BJ (cell line): ENCODE measurements at regions of chr7 and their contacts with region 1.

Region 1: DNA sequence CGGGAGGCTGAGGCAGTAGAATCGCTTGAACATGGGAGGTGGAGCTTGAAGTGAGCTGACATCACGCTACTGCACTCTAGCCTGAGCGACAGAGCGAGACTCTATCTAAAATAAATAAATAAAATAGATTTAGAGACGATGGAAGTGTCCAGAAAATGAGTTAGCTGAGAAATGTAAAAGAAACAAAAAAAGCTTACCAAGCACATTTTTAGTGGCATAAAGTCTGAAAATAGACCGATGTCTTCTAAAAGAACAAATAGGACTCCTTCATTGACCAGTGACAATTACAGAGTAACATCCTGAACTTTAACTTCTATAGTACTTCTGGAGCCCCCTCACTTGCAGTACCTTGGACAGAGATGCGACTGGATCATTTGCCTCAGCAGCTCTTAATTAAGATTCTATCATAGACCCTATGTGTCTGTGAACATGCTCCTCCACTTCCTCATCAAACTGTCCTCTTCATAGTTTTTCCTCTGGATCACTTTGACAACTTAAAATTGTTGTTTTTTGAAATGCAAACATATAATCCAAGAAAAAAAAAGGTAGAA is 25.2 kb upstream of the SRPK2 start:
- DNase-seq: no peak
- H3K4me3 ChIP-seq: no peak overlapping the region
- H3K27me3 ChIP-seq: peaks cover 2% of the 10 kb centered on the region; the same call in 1 of the 2 replicates
- CTCF ChIP-seq: no peak

Region 2: DNA sequence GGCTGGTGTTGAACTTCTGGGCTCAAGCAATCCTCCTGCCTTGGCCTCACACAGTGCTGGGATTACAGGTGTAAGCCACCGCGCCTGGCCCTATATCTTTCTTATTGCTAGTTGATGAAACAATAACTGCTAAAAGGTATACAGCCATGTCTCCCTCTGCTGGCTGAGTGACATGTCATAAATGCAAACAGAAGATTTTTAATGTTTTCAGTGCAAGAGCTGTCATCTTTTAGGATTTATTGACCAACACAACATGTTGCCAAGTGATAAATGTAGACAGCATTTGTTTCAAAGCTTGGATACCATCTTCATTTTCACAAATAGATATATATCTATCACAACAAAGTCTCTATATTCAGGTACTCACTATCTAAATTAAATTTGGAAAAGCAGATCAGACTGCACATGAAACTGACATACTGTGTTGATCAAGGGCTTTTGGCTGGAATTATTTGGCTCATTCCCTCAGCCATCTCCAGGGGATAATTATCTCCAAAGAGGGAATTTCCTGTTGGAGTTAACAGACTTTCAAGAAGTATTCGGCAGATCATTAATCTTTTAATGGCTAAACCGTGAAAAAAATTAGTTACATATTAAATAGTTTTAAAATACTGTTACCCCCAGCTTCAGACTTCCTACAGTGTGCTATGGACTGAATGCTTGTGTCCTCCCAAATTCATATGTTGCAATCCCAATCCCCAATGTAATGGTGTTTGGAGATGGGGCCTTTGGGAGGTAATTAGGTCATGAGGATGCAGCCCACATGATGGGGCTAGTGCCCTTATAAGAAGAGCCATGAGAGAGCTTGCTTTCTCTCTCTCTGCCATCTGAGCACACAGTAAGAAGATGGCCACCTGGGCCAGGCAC is 16.0 kb after region 1 on chr7:
- CTCF ChIA-PET with region 1: interaction called, 11 read pairs
- POLR2A ChIA-PET with region 1: no interaction called
- DNase-seq: no peak
- H3K4me3 ChIP-seq: no peak overlapping the region
- H3K27me3 ChIP-seq: no peaks in the 10 kb centered on the region
- CTCF ChIP-seq: peak; percentile 47

Region 3: DNA sequence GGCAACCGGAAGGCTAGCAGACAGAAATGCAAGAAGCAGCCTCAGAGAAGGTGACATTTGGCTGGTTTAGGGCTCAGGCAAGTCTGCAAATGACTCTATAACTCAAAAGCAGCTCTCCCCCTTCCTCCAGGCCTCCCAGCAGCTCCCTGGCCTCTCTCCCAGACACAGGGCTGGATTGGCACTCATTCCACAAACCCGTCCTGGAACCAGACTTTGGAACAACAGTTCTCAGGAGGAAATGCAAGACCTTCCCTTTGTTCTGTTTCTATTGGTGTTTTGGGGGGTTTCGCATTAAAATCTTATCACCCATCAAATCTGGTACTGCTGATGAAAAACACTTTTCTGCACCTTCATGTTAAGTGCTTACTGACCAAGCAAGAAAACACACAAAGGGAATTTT is 207.7 kb after region 1 on chr7:
- CTCF ChIA-PET with region 1: no interaction called
- POLR2A ChIA-PET with region 1: no interaction called
- DNase-seq: peak; percentile 19
- H3K4me3 ChIP-seq: no peak overlapping the region
- H3K27me3 ChIP-seq: no peaks in the 10 kb centered on the region
- CTCF ChIP-seq: no peak

Region 4: DNA sequence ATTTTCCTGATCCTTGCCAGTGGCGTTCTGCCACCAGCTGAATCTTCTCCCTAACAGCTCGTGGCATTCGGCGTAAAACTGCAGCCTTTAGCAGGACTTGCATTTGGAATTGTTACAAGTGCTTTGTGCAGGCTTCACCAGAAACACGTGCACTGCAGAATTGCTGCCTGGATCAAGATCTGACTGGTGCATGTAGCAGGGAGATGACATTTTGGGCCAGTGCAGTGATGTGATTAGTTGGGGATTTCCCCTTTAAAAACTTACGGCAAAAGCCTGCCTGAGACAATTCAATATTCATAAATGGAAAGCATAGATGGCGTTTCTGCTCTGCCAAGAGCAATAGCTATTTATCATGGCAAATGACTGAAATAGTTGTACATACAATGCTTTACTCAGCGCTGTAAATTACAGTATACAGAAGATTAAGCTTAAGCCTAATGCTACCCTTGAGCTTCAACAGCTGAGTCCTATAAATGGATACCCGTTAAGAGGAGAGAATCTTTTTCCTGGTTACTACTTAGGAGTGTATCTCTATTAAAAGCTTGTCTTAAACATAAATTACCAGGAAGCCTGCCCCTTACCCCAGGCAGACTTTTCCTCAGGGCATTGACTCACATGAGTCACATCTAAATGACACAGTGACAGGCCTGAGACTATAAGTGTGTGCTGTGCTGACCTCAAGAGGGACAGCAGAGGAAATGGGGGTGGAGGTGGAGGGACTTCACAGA is 356.1 kb after region 1 on chr7:
- CTCF ChIA-PET with region 1: no interaction called
- POLR2A ChIA-PET with region 1: no interaction called
- DNase-seq: no peak
- H3K4me3 ChIP-seq: no peak overlapping the region
- H3K27me3 ChIP-seq: no peaks in the 10 kb centered on the region
- CTCF ChIP-seq: no peak